ENCODE measurements at regions of chr2 and their contacts with region 1.

Region 1: GRCh38 chr2:237026981-237027711 is 58.5 kb upstream of the COPS8 start:
- DNase-seq: peak; percentile 74
- H3K4me3 ChIP-seq: no peak overlapping the region
- H3K27ac ChIP-seq: no peak overlapping the region
- H3K4me1 ChIP-seq: no peaks in the 10 kb centered on the region
- H3K27me3 ChIP-seq: no peaks in the 10 kb centered on the region
- CTCF ChIP-seq: peak; percentile 93

Region 2: GRCh38 chr2:236512902-236513435 is 514.2 kb before region 1 on chr2:
- intact Hi-C with region 1: loop called (anchors 5 kb)
- DNase-seq: peak; percentile 53
- H3K4me3 ChIP-seq: no peak overlapping the region
- H3K27ac ChIP-seq: no peak overlapping the region
- H3K4me1 ChIP-seq: peaks cover 12% of the 10 kb centered on the region
- H3K27me3 ChIP-seq: peaks cover 5% of the 10 kb centered on the region
- CTCF ChIP-seq: peak; percentile 93

Region 3: GRCh38 chr2:236562434-236562833 is 464.7 kb before region 1 on chr2:
- intact Hi-C with region 1: loop called (anchors 5 kb)
- DNase-seq: no peak
- H3K4me3 ChIP-seq: no peak overlapping the region
- H3K27ac ChIP-seq: no peak overlapping the region
- H3K4me1 ChIP-seq: peaks cover 15% of the 10 kb centered on the region
- H3K27me3 ChIP-seq: no peaks in the 10 kb centered on the region
- CTCF ChIP-seq: peak; percentile 75

Region 4: DNA sequence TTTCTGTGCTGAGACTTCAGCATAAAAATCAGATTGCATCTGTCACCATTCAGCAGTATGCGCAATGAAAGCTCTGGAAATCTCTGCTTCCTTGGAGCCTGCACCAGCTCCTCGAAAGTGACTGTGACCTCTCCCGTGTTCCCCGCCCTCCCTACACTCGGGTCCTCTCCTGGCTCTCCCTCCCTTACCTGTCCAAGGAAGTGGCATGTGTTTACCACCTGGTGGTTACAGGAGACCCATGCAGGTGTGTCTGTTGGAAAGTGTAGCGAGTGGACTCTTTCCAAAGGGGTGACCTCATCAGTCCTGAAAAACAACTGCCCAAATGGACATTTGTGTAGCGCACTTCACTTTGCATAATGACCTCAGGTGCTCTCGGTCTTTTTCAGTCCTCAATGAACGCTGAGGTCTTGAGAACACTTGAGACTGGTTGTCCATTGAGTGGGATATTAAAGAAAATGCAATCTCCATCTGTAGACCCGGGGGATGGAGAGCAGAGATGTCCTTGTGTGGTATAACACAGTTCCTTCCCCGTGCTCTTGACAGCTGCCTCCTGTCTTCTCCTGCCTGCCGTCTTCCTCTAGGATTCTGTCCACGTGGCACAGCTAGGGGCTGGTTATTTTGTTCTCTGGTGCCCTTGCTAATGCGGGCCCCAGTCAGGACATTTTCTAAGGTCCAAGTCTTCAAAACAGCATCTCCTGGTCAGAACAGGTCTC is 324.3 kb before region 1 on chr2:
- intact Hi-C with region 1: no loop called
- DNase-seq: no peak
- H3K4me3 ChIP-seq: no peak overlapping the region
- H3K27ac ChIP-seq: no peak overlapping the region
- H3K4me1 ChIP-seq: peaks cover 13% of the 10 kb centered on the region
- H3K27me3 ChIP-seq: no peaks in the 10 kb centered on the region
- CTCF ChIP-seq: no peak